ENCODE measurements at regions of chr19 and their contacts with region 1.

Region 1: GRCh38 chr19:44890366-44891015 is 563 bp upstream of the TOMM40 start:
- DNase-seq: peak; percentile 100
- H3K4me3 ChIP-seq: peak overlapping the region; percentile 39
- H3K4me3 Mint-ChIP-seq: peak overlapping the region; percentile 79
- H3K27ac Mint-ChIP-seq: peak overlapping the region; percentile 91
- H3K4me1 ChIP-seq: peaks cover 9% of the 10 kb centered on the region
- H3K4me1 Mint-ChIP-seq: peaks cover 12% of the 10 kb centered on the region
- H3K27me3 ChIP-seq: no peaks in the 10 kb centered on the region
- H3K27me3 Mint-ChIP-seq: no peaks in the 10 kb centered on the region
- CTCF ChIP-seq: no peak

Region 2: GRCh38 chr19:44856421-44857083 is 33.9 kb before region 1 on chr19:
- CTCF ChIA-PET with region 1: no interaction called
- POLR2A ChIA-PET with region 1: no interaction called
- intact Hi-C with region 1: loop called (anchors 1 kb)
- DNase-seq: no peak
- H3K4me3 ChIP-seq: no peak overlapping the region
- H3K4me3 Mint-ChIP-seq: no peak overlapping the region
- H3K27ac Mint-ChIP-seq: peak overlapping the region; percentile 76
- H3K4me1 ChIP-seq: peaks cover 3% of the 10 kb centered on the region; the same call in 1 of the 2 replicates
- H3K4me1 Mint-ChIP-seq: peaks cover 17% of the 10 kb centered on the region
- H3K27me3 ChIP-seq: no peaks in the 10 kb centered on the region
- H3K27me3 Mint-ChIP-seq: no peaks in the 10 kb centered on the region
- CTCF ChIP-seq: no peak

Region 3: GRCh38 chr19:44875666-44876451 is 14.6 kb before region 1 on chr19:
- CTCF ChIA-PET with region 1: no interaction called
- POLR2A ChIA-PET with region 1: no interaction called
- intact Hi-C with region 1: no loop called
- DNase-seq: no peak
- H3K4me3 ChIP-seq: no peak overlapping the region
- H3K4me3 Mint-ChIP-seq: no peak overlapping the region
- H3K27ac Mint-ChIP-seq: peak overlapping the region; percentile 16
- H3K4me1 ChIP-seq: peaks cover 17% of the 10 kb centered on the region
- H3K4me1 Mint-ChIP-seq: peaks cover 17% of the 10 kb centered on the region
- H3K27me3 ChIP-seq: no peaks in the 10 kb centered on the region
- H3K27me3 Mint-ChIP-seq: no peaks in the 10 kb centered on the region
- CTCF ChIP-seq: no peak